ENCODE measurements at regions of chr15 and their contacts with region 1.

Region 1: GRCh38 chr15:58987489-58988005 is at the start of gene RNF111:
- DNase-seq: peak; percentile 91
- H3K4me3 ChIP-seq: peak within 1 kb of the TSS; percentile 79 to 94
- H3K27ac ChIP-seq: peak within 1 kb of the TSS; percentile 90 to 96
- H3K4me1 ChIP-seq: peaks cover 8% of the 10 kb centered on the region
- H3K27me3 ChIP-seq: no peaks in the 10 kb centered on the region
- CTCF ChIP-seq: peak in 1 of 4 experiments; percentile 8
- POLR2A ChIP-seq: peak; percentile 77
- total RNA-seq, gene RNF111: 15.4 to 22.5 TPM

Region 2: DNA sequence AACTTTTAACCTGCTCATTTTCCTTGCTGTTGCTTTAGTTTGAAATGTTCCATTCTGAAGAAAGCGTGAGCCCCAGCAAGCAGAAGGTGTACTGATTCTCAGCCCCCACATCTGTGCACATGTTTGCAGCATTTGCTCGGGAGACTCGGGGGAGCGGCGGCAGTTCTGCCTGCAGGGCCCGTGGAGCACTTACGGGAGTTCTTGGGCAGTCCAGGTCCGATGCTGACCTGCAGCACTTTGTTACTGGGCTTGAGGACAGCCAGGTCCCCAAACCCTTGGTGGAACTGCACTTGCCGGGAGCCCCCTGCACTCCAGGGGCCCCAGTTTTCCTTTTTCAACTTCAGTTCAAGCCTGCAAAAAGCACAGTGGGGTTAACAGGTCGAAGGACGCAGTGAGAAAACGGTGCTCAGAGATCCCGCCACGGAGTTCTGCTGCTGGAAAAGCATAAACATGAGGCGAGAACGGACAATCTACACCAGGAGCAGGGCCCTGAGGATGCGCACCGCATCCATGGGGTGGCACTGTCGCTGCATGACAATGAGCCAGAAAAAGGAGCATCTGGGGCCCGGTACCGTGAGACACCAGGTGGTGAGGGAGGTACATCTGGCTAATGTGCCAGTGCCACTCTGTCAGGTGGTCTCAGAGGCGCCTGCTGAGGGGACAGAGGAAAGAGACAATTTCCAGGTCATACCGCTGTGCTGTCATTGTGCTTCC is 173.5 kb after region 1 on chr15:
- intact Hi-C with region 1: loop called (anchors 10 kb)
- DNase-seq: no peak
- H3K4me3 ChIP-seq: no peak overlapping the region
- H3K27ac ChIP-seq: no peak overlapping the region
- H3K4me1 ChIP-seq: peaks cover 17% of the 10 kb centered on the region
- H3K27me3 ChIP-seq: no peaks in the 10 kb centered on the region
- CTCF ChIP-seq: peak in 3 of 4 experiments; percentile 31 to 61 (median 53)
- POLR2A ChIP-seq: no peak

Measured in prostate gland (tissue), 2 donors.